ENCODE measurements at regions of chr20 and their contacts with region 1.

Region 1: GRCh38 chr20:35741892-35742740 is at the start of gene RBM39:
- DNase-seq: peak; percentile 100
- H3K4me3 ChIP-seq: peak within 1 kb of the TSS; percentile 89
- H3K27ac ChIP-seq: peak within 1 kb of the TSS; percentile 99
- H3K27me3 ChIP-seq: no peaks in the 10 kb centered on the region
- CTCF ChIP-seq: peak; percentile 52
- polyA plus RNA-seq, gene RBM39: 144 and 162 TPM in 2 replicates

Region 2: DNA sequence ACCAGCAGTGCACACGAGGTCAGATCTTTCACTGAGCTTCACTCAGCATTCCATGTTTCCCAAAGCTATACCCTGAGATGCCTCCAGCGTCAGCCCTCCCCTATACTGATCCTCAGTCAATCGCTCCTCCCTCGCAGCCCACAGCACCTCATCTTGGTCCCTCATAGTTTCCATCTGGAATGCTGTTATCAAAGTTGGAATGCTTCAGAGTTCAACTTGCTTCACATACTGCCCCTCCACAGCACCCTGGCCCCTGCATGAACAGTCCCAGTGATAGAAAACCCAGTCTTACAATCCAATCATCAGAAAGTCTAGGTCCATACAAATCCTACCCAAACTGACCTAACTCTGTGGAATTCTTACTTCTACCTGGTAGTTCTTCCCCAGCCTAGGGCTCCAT is 106.5 kb before region 1 on chr20:
- CTCF ChIA-PET with region 1: no interaction called
- POLR2A ChIA-PET with region 1: no interaction called
- DNase-seq: no peak
- H3K4me3 ChIP-seq: no peak overlapping the region
- H3K27ac ChIP-seq: no peak overlapping the region
- H3K27me3 ChIP-seq: no peaks in the 10 kb centered on the region
- CTCF ChIP-seq: no peak

Region 3: GRCh38 chr20:35680452-35681183 is 61.5 kb before region 1 on chr20:
- CTCF ChIA-PET with region 1: no interaction called
- POLR2A ChIA-PET with region 1: no interaction called
- DNase-seq: no peak
- H3K4me3 ChIP-seq: no peak overlapping the region
- H3K27ac ChIP-seq: no peak overlapping the region
- H3K27me3 ChIP-seq: no peaks in the 10 kb centered on the region
- CTCF ChIP-seq: no peak

Region 4: DNA sequence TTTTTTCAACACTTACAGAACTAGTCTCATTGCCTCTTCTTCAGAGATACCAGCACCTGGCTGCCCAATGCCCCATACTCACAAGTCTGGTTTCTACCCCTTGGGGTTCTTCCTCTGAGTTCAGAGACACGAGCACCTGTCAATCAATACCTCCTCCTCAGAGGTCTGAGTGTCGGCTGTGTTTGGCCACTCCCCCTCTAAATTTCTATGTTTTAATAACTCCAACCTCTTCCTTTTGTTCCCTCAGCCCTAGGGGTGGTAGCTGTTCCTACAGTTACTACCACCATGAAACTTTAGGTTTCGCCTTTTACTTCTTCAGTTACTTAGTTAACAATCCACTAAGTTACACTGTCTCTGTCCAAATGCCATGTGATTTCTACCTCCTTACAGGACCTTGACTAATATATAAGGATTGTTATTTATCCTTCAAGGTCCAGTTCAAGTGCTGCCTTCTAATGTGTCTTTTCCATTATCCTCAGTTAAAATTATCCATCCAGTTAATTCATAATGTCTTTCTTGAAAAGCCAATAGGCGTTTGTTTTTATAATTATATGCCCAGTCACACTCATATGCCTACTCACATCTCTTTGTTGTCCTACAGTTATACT is 15.1 kb after region 1 on chr20:
- CTCF ChIA-PET with region 1: interaction called, 3 read pairs
- POLR2A ChIA-PET with region 1: interaction called, 25 read pairs
- DNase-seq: no peak
- H3K4me3 ChIP-seq: no peak overlapping the region
- H3K27ac ChIP-seq: no peak overlapping the region
- H3K27me3 ChIP-seq: peaks cover 4% of the 10 kb centered on the region
- CTCF ChIP-seq: no peak

Region 5: DNA sequence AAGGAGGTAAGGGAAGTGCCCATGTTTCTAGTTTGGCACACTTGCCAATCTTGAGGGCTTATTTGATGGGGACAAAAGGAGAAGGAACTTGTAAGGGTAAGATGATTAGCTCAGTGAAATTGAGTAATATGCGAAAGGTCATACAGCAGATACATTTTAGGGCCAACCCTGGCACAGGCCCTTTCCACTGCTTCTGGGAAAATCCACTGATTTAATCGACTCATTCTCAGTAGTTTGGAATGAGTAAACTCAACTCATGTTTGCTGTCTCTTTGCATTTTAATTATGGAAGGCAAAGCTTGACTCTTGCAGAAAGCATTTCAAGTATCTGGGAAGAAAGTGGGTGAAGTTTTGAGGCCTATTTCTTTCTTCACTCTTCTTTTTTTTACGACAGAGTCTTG is 49.7 kb after region 1 on chr20:
- CTCF ChIA-PET with region 1: interaction called, 5 read pairs
- POLR2A ChIA-PET with region 1: interaction called, 11 read pairs
- DNase-seq: peak; percentile 65
- H3K4me3 ChIP-seq: no peak overlapping the region; the same call in 1 of the 2 replicates
- H3K27ac ChIP-seq: peak overlapping the region; percentile 94
- H3K27me3 ChIP-seq: no peaks in the 10 kb centered on the region
- CTCF ChIP-seq: no peak

Region 6: GRCh38 chr20:35883778-35884540 is 141.8 kb after region 1 on chr20:
- CTCF ChIA-PET with region 1: interaction called, 7 read pairs
- POLR2A ChIA-PET with region 1: interaction called, 34 read pairs
- DNase-seq: peak; percentile 98
- H3K4me3 ChIP-seq: peak overlapping the region; percentile 48
- H3K27ac ChIP-seq: peak overlapping the region; percentile 99
- H3K27me3 ChIP-seq: no peaks in the 10 kb centered on the region
- CTCF ChIP-seq: peak; percentile 65